ENCODE measurements at regions of chr4 and their contacts with region 1.

Region 1: DNA sequence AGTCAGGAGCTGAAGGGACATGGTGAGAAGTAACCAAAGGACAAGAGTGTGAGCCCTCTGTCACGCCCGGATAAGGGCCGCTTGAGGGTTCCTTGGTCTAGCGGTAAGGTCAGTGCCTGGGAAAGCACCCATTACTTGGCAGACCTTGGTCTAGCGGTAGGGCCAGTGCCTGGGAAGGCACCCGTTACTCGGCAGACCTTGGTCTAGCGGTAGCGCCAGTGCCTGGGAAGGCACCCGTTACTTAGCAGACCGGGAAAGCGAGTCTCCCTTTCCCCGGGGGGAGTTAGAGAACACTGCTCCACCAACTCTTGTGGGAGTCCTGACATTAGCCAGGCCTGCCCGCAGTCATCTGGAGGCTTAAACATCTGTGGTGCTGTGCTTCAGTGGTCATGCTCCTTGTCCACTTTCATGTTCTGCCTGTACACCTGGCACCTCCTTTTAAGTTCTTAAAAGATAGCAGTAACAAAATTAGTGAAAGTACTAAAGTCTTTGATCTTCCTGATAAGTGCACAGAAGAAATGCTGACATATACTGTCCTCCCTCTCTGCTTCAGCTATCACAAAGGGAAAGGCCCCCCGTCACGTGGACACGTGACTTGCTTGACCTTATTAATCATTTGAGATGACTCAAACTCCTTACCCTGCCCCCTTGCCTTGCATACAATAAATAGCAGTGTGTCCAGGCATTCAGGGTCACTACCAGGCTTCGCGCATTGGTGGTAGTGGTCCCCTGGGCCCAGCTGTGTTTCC is 9.3 kb upstream of the SEC24B start:
- DNase-seq: no peak
- H3K4me3 ChIP-seq: no peak overlapping the region
- H3K27me3 ChIP-seq: no peaks in the 10 kb centered on the region
- CTCF ChIP-seq: no peak

Region 2: DNA sequence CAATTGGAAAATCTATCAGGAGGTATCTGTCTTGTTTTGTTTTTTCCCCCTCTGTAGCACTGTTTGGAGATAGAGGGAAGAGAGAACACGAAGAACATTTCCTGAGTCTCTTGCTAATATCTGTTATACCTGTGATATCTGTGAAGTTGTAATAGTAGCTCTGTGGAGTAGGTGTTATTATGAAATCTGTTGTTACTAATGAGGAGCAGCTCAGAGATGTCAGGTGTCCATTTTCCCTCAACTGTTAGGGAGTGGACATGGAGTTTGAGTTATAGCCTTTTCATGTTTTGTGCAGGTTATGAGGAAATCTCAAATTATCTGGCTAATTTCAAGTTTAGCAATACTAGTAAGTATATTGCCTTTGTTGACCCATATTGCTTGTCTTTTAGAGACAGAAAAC is 61.7 kb after region 1 on chr4:
- CTCF ChIA-PET with region 1: no interaction called
- POLR2A ChIA-PET with region 1: interaction called, 19 read pairs
- DNase-seq: no peak
- H3K4me3 ChIP-seq: no peak overlapping the region
- H3K27me3 ChIP-seq: no peaks in the 10 kb centered on the region
- CTCF ChIP-seq: no peak

Region 3: GRCh38 chr4:109977854-109978501 is 553.7 kb after region 1 on chr4:
- CTCF ChIA-PET with region 1: interaction called, 16 read pairs
- POLR2A ChIA-PET with region 1: no interaction called
- DNase-seq: no peak
- H3K4me3 ChIP-seq: no peak overlapping the region
- H3K27me3 ChIP-seq: no peaks in the 10 kb centered on the region
- CTCF ChIP-seq: peak; percentile 66

Measured in BJ (cell line).